ENCODE measurements at regions of chr6 and their contacts with region 1.

Region 1: GRCh38 chr6:149028767-149029405 is 282.1 kb downstream of the UST start:
- DNase-seq: peak; percentile 71
- H3K4me3 Mint-ChIP-seq: no peak overlapping the region
- H3K27ac Mint-ChIP-seq: peak overlapping the region; percentile 71
- H3K4me1 Mint-ChIP-seq: peaks cover 53% of the 10 kb centered on the region
- H3K27me3 Mint-ChIP-seq: no peaks in the 10 kb centered on the region

Region 2: DNA sequence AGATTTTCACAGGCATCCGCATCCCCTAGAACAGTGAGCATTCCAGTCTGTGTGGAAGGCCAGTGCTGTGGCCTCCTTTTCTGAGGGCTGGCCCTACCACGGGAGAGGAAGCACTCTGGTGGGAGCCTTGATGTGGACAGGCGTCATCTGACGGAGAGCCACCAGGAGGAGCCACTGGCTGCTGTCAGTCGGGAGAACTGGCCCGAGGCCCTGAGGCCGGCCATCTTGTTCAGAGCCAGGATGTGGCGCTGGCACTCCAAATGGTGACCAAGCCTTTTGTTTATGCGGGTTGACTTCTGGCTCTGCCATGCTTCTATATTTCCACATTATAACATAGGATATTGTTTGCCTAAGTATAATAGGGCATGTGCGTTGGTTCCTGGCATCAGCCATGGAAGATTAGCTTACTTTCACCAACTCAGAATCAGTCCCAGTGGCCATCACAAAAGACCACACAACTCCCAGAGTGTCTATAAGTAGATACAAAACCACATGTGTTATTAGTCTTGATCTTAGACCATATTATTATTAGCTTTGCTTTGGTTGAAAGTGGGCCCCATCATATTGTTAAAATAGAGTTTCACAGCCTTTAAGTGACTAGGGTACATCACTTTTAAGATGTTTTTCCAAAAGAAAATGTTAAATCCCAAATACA is 14.7 kb after region 1 on chr6:
- CTCF ChIA-PET with region 1: interaction called, 24 read pairs
- POLR2A ChIA-PET with region 1: interaction called, 57 read pairs
- DNase-seq: peak; percentile 45
- H3K4me3 Mint-ChIP-seq: no peak overlapping the region
- H3K27ac Mint-ChIP-seq: no peak overlapping the region
- H3K4me1 Mint-ChIP-seq: peaks cover 55% of the 10 kb centered on the region
- H3K27me3 Mint-ChIP-seq: no peaks in the 10 kb centered on the region

Region 3: GRCh38 chr6:149065658-149066556 is 37.0 kb after region 1 on chr6:
- CTCF ChIA-PET with region 1: interaction called, 12 read pairs
- POLR2A ChIA-PET with region 1: interaction called, 53 read pairs
- DNase-seq: peak; percentile 38
- H3K4me3 Mint-ChIP-seq: peak overlapping the region; percentile 12
- H3K27ac Mint-ChIP-seq: peak overlapping the region; percentile 89
- H3K4me1 Mint-ChIP-seq: peaks cover 53% of the 10 kb centered on the region
- H3K27me3 Mint-ChIP-seq: no peaks in the 10 kb centered on the region

Region 4: GRCh38 chr6:149094156-149094555 is 65.3 kb after region 1 on chr6:
- CTCF ChIA-PET with region 1: interaction called, 6 read pairs
- POLR2A ChIA-PET with region 1: interaction called, 68 read pairs
- DNase-seq: peak; percentile 48
- H3K4me3 Mint-ChIP-seq: peak overlapping the region; percentile 71
- H3K27ac Mint-ChIP-seq: peak overlapping the region; percentile 97
- H3K4me1 Mint-ChIP-seq: peaks cover 80% of the 10 kb centered on the region
- H3K27me3 Mint-ChIP-seq: no peaks in the 10 kb centered on the region

Region 5: GRCh38 chr6:149147938-149148718 is 119.2 kb after region 1 on chr6:
- CTCF ChIA-PET with region 1: interaction called, 8 read pairs
- POLR2A ChIA-PET with region 1: interaction called, 57 read pairs
- DNase-seq: peak; percentile 50
- H3K4me3 Mint-ChIP-seq: peak overlapping the region; percentile 44
- H3K27ac Mint-ChIP-seq: peak overlapping the region; percentile 91
- H3K4me1 Mint-ChIP-seq: peaks cover 91% of the 10 kb centered on the region
- H3K27me3 Mint-ChIP-seq: no peaks in the 10 kb centered on the region

Region 6: GRCh38 chr6:149431905-149432775 is 403.3 kb after region 1 on chr6:
- CTCF ChIA-PET with region 1: interaction called, 228 read pairs
- POLR2A ChIA-PET with region 1: interaction called, 14 read pairs
- DNase-seq: peak; percentile 91
- H3K4me3 Mint-ChIP-seq: peak overlapping the region; percentile 55
- H3K27ac Mint-ChIP-seq: peak overlapping the region; percentile 66
- H3K4me1 Mint-ChIP-seq: peaks cover 9% of the 10 kb centered on the region
- H3K27me3 Mint-ChIP-seq: no peaks in the 10 kb centered on the region

Region 7: DNA sequence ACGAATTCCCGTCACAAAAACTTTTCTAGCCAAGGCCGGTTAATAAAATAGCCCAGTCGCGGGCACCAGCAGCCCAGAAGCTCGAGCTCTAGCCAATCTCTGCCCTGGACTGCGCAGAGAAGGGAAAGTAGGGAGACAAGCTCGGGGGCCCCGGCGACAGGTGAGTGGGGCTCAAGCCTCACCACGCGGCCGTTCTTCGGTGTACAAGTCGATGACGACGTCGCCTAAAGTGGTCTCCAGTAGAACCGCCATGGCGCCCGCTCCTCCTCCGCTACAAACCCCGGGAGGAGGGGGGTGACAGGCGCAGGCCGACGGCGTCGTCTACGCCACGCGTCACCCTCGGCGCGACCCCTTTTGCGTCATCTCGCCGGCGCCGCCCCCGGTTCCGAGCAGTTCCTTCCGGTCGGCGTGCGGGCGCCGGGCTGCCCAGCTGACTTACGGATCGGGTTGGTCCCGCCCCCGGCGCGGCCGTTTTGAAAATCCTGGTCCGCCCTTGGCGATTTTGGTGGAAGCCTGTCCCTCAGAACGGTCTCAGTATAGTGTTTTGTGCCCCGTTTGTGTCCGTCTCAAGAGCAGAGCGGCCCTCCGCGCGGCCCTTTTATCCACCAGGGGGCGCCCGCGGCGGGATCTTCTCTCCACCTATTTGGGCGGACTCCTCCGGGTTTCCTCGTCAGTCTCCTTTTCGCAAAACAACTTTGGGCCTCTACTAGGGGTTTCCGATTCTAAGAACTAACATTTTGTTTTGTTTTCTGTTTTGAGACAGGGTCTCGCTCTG is 517.1 kb after region 1 on chr6 and contains the start of gene PPIL4:
- CTCF ChIA-PET with region 1: interaction called, 4 read pairs
- POLR2A ChIA-PET with region 1: interaction called, 10 read pairs
- DNase-seq: peak; percentile 97
- H3K4me3 Mint-ChIP-seq: peak within 1 kb of the TSS; percentile 97
- H3K27ac Mint-ChIP-seq: peak within 1 kb of the TSS; percentile 95
- H3K4me1 Mint-ChIP-seq: peaks cover 39% of the 10 kb centered on the region
- H3K27me3 Mint-ChIP-seq: peaks cover 9% of the 10 kb centered on the region
- total RNA-seq, gene PPIL4: 17.0 to 18.3 TPM

Measured in activated CD4-positive, alpha-beta memory T cell treated with anti-CD3 and anti-CD28 coated beads, Interleukin-2, amount 10 ng/mL, durations not matched to agents 7 days and 5 days (primary cell).